CD14-positive monocyte (primary cell): ENCODE measurements at regions of chr12 and their contacts with region 1.

Region 1: GRCh38 chr12:33628093-33628492 is 188.5 kb upstream of the SYT10 start:
- DNase-seq: no peak
- H3K4me3 ChIP-seq: no peak overlapping the region
- H3K4me3 Mint-ChIP-seq: no peak overlapping the region
- H3K27ac ChIP-seq: no peak overlapping the region
- H3K27ac Mint-ChIP-seq: no peak overlapping the region
- H3K4me1 ChIP-seq: no peaks in the 10 kb centered on the region
- H3K4me1 Mint-ChIP-seq: no peaks in the 10 kb centered on the region
- H3K27me3 ChIP-seq: no peaks in the 10 kb centered on the region
- H3K27me3 Mint-ChIP-seq: peaks cover 0 to 3% (median 1%) of the 10 kb centered on the region in 3 donors
- CTCF ChIP-seq: no peak

Region 2: GRCh38 chr12:32920280-32921089 is 707.6 kb before region 1 on chr12:
- intact Hi-C with region 1: loop called in 1 of 2 experiments (anchors 10 kb)
- DNase-seq: peak in 1 of 3 donors; percentile 14
- H3K4me3 ChIP-seq: no peak overlapping the region
- H3K4me3 Mint-ChIP-seq: no peak overlapping the region
- H3K27ac ChIP-seq: peak overlapping the region in 1 of 2 donors; percentile 28
- H3K27ac Mint-ChIP-seq: peak overlapping the region; percentile 60 to 92 (median 88)
- H3K4me1 ChIP-seq: peaks cover 12 to 17% of the 10 kb centered on the region in 2 donors
- H3K4me1 Mint-ChIP-seq: peaks cover 16% of the 10 kb centered on the region
- H3K27me3 ChIP-seq: no peaks in the 10 kb centered on the region
- H3K27me3 Mint-ChIP-seq: peaks cover 5 to 12% (median 5%) of the 10 kb centered on the region in 3 donors
- CTCF ChIP-seq: no peak

Region 3: DNA sequence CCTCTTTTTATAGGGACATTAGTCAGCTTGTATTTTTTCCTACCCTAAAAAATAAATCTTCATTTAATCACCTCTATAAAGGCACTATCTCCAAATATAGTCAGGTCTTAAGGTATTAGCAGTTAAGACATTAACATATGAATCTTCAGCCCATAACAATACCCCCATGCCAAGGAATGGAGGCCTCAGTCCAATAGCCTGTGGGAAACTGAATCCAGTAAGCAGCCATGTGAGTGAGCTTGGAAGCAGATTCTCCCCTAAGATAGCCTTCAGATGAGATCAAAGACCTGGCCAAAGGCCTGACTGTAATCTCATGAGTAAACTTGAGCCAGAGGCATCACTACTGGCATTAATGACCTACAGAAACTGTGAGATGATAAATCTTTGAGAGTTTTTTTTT is 43.6 kb after region 1 on chr12:
- intact Hi-C with region 1: no loop called
- DNase-seq: no peak
- H3K4me3 ChIP-seq: no peak overlapping the region
- H3K4me3 Mint-ChIP-seq: no peak overlapping the region
- H3K27ac ChIP-seq: no peak overlapping the region
- H3K27ac Mint-ChIP-seq: no peak overlapping the region
- H3K4me1 ChIP-seq: no peaks in the 10 kb centered on the region
- H3K4me1 Mint-ChIP-seq: no peaks in the 10 kb centered on the region
- H3K27me3 ChIP-seq: no peaks in the 10 kb centered on the region
- H3K27me3 Mint-ChIP-seq: peaks cover 0 to 4% (median 1%) of the 10 kb centered on the region in 3 donors
- CTCF ChIP-seq: no peak